T-cell (primary cell): ENCODE measurements at regions of chr15 and their contacts with region 1.

Region 1: DNA sequence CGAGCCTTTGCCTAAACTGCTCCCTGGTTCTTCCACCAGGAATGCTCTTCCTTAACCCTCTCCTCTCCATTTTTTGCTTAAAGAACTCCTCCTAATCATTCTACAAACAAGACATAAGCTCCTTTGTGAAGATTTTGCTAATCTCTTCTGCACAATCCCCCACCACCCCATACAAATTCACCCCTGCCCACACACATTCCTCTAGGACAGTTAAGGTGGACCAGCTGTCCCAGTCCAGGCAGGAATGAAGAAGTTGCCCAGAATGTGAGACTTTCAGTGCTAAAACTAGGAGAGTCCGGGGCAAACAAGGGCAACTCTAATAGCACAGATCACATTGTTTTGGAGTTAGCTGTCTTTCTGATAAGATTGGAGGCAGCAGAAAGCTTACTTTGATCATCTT is 13.9 kb upstream of the FAM174B start:
- DNase-seq: no peak
- ATAC-seq: no peak
- H3K4me3 ChIP-seq: no peak overlapping the region
- H3K4me3 Mint-ChIP-seq: no peak overlapping the region
- H3K27ac ChIP-seq: no peak overlapping the region
- H3K27ac Mint-ChIP-seq: no peak overlapping the region
- H3K4me1 ChIP-seq: no peaks in the 10 kb centered on the region
- H3K4me1 Mint-ChIP-seq: peaks cover 0 to 1% (median 0%) of the 10 kb centered on the region in 3 donors
- H3K27me3 ChIP-seq: peaks cover 0 to 20% of the 10 kb centered on the region in 2 experiments
- H3K27me3 Mint-ChIP-seq: peaks cover 0 to 15% of the 10 kb centered on the region in 2 donors

Region 2: DNA sequence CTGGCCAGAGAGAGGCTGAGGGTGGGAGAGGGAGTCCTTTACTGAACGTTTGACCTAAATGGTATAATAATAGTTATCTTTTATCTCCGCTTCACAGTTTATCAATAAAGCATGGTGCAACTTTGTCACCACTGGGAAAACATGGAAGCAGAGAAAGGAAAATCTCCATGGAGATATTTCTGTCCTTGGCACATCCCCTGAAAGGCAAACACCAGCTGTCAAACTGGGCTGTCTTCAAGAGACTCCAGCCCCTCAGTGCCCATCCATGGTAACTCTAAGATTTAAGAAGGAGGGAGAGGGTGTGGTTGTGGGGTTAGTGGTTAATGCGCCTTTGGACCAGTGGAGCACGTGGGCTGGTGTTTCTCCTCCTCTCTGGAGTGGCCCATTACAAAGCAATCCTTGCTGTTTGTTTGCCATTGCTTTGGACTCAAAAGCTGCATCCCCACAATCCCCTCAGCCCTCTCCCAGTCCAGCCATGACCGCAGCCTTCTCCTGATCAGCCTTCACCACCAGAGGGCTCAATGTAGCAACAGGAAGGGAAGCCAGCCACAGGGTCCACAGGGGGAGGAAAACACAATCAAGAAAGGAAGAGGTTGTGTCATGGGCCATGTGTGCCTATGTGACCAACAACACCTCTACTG is 24.4 kb after region 1 on chr15:
- CTCF ChIA-PET with region 1: no interaction called
- POLR2A ChIA-PET with region 1: interaction called in 1 of 2 experiments, 15 read pairs
- DNase-seq: no peak
- ATAC-seq: no peak
- H3K4me3 ChIP-seq: no peak overlapping the region
- H3K4me3 Mint-ChIP-seq: no peak overlapping the region
- H3K27ac ChIP-seq: no peak overlapping the region
- H3K27ac Mint-ChIP-seq: no peak overlapping the region
- H3K4me1 ChIP-seq: no peaks in the 10 kb centered on the region
- H3K4me1 Mint-ChIP-seq: no peaks in the 10 kb centered on the region
- H3K27me3 ChIP-seq: peaks cover 0 to 11% of the 10 kb centered on the region in 2 experiments
- H3K27me3 Mint-ChIP-seq: peaks cover 7 to 18% of the 10 kb centered on the region in 2 donors

Region 3: GRCh38 chr15:92733934-92734521 is 64.6 kb after region 1 on chr15:
- CTCF ChIA-PET with region 1: no interaction called
- POLR2A ChIA-PET with region 1: no interaction called
- DNase-seq: peak in 16 of 35 experiments; percentile 1 to 42 (median 14)
- ATAC-seq: peak; percentile 60 to 78 (median 73)
- H3K4me3 ChIP-seq: peak overlapping the region; percentile 36 to 64
- H3K4me3 Mint-ChIP-seq: peak overlapping the region; percentile 77 to 87 (median 85)
- H3K27ac ChIP-seq: no peak overlapping the region
- H3K27ac Mint-ChIP-seq: peak overlapping the region in 1 of 2 donors; percentile 82
- H3K4me1 ChIP-seq: peaks cover 2 to 8% of the 10 kb centered on the region in 2 experiments
- H3K4me1 Mint-ChIP-seq: peaks cover 7 to 10% (median 10%) of the 10 kb centered on the region in 3 donors
- H3K27me3 ChIP-seq: peaks cover 0 to 9% of the 10 kb centered on the region in 2 experiments
- H3K27me3 Mint-ChIP-seq: peaks cover 10 to 14% of the 10 kb centered on the region in 2 donors